Activated CD4-positive, alpha-beta memory T cell treated with anti-CD3 and anti-CD28 coated beads for 36 hours (primary cell): ENCODE measurements at regions of chr22 and their contacts with region 1.

Region 1: DNA sequence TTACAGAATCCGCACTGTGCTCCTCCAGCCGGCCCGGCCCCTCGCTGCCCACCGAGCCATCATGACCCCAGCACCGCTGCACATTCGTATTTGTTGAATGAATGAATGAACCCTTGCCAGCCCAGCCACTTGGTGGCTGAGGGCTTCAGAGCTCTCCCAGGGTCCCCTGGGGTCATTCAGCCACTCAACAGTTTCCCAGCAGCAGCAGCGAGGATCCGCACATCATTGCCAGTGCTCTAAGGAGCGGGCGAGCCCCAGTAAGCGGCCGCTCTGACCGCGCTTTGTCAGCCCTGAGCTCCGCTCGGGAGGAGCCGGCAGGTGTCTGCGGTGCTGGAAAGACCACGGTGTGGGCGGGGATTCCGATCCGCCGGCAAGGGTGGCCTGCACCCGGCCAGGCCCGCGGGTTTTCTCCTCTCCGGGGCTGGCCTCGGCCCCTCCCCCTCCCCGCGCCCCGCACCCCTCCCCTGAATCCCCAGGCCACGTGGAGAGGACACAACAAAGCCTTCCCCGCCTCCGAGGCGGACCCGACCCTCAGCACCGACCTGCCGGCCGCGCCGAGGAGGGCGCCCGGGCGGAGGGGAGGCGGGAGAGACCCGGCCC is 563 bp downstream of the BID start:
- DNase-seq: peak; percentile 82
- H3K4me3 Mint-ChIP-seq: peak overlapping the region; percentile 76
- H3K27ac Mint-ChIP-seq: no peak overlapping the region
- H3K4me1 Mint-ChIP-seq: peaks cover 60% of the 10 kb centered on the region
- H3K27me3 Mint-ChIP-seq: peaks cover 7% of the 10 kb centered on the region

Region 2: GRCh38 chr22:17628304-17629166 is 145.2 kb before region 1 on chr22 and contains the start of gene ATP6V1E1:
- CTCF ChIA-PET with region 1: no interaction called
- POLR2A ChIA-PET with region 1: no interaction called
- intact Hi-C with region 1: loop called (anchors 5 kb)
- DNase-seq: peak; percentile 98
- H3K4me3 Mint-ChIP-seq: peak within 1 kb of the TSS; percentile 94
- H3K27ac Mint-ChIP-seq: peak within 1 kb of the TSS; percentile 79
- H3K4me1 Mint-ChIP-seq: peaks cover 29% of the 10 kb centered on the region
- H3K27me3 Mint-ChIP-seq: no peaks in the 10 kb centered on the region
- total RNA-seq, gene ATP6V1E1: 95.5 to 97.9 TPM

Region 3: DNA sequence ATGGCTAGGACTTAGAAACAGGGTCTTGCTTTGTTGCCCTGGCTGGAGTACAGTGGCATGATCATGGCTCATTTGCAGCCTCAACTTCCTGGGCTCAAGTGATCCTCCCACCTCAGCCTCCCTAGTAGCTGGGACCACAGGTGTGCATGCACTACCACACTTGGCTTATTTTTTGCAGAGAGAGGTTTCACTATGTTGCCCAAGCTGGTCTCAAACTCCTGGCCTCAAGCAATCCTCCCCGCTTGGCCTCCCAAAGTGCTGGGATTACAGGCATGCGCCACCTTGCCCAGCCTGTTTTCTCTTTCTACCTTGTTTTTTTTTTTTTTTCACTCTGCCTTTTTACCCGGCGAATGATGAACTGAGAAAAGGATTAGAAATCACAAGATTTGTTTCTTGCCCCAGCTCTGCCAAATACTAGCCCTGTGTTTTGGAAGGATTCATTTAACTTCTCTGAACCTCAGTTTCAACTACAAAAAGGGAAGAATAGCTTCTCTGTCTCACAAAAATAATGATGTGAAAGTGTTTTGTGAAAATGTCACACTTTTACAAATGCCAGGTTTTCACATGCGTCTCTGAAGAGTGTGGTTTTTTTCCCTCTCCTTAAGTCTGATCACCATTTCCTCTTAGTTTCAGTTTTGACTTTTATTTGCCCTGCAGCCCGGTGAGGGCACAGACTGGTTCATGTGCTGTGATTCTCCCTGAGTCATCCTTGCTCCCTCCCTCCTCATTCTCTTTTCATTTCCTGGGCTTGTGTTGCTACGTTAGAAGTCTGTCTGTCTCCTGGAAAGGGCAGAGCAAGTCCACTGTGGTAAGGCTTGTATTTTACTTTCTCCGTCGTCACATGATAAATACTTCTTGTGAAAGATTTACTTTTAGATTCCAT is 67.4 kb before region 1 on chr22:
- CTCF ChIA-PET with region 1: no interaction called
- POLR2A ChIA-PET with region 1: no interaction called
- intact Hi-C with region 1: loop called (anchors 1 kb)
- DNase-seq: peak; percentile 68
- H3K4me3 Mint-ChIP-seq: peak overlapping the region; percentile 51
- H3K27ac Mint-ChIP-seq: peak overlapping the region; percentile 87
- H3K4me1 Mint-ChIP-seq: peaks cover 15% of the 10 kb centered on the region
- H3K27me3 Mint-ChIP-seq: no peaks in the 10 kb centered on the region